ENCODE measurements at regions of chr12 and their contacts with region 1.

Region 1: GRCh38 chr12:2360629-2361168 is 307.9 kb downstream of the CACNA1C start:
- DNase-seq: no peak
- H3K4me3 ChIP-seq: no peak overlapping the region
- H3K27ac ChIP-seq: no peak overlapping the region
- H3K4me1 ChIP-seq: peaks cover 36% of the 10 kb centered on the region
- H3K27me3 ChIP-seq: no peaks in the 10 kb centered on the region
- CTCF ChIP-seq: peak; percentile 24 to 32

Region 2: GRCh38 chr12:2338991-2339431 is 21.7 kb before region 1 on chr12:
- CTCF ChIA-PET with region 1: no interaction called
- dilution Hi-C with region 1: no loop called
- in situ Hi-C with region 1: no loop called
- intact Hi-C with region 1: loop called (anchors 1 kb)
- DNase-seq: peak; percentile 85
- H3K4me3 ChIP-seq: no peak overlapping the region
- H3K27ac ChIP-seq: peak overlapping the region; percentile 53
- H3K4me1 ChIP-seq: peaks cover 57% of the 10 kb centered on the region
- H3K27me3 ChIP-seq: no peaks in the 10 kb centered on the region
- CTCF ChIP-seq: no peak

Region 3: GRCh38 chr12:2395354-2395977 is 34.8 kb after region 1 on chr12:
- CTCF ChIA-PET with region 1: no interaction called
- dilution Hi-C with region 1: loop called (anchors 5 kb)
- in situ Hi-C with region 1: no loop called
- intact Hi-C with region 1: no loop called
- DNase-seq: no peak
- H3K4me3 ChIP-seq: no peak overlapping the region
- H3K27ac ChIP-seq: no peak overlapping the region
- H3K4me1 ChIP-seq: peaks cover 12% of the 10 kb centered on the region
- H3K27me3 ChIP-seq: no peaks in the 10 kb centered on the region
- CTCF ChIP-seq: peak; percentile 78 to 79

Region 4: GRCh38 chr12:2547273-2548044 is 186.8 kb after region 1 on chr12:
- CTCF ChIA-PET with region 1: interaction called, 10 read pairs
- dilution Hi-C with region 1: no loop called
- in situ Hi-C with region 1: no loop called
- intact Hi-C with region 1: no loop called
- DNase-seq: no peak
- H3K4me3 ChIP-seq: no peak overlapping the region
- H3K27ac ChIP-seq: no peak overlapping the region
- H3K4me1 ChIP-seq: no peaks in the 10 kb centered on the region
- H3K27me3 ChIP-seq: no peaks in the 10 kb centered on the region
- CTCF ChIP-seq: no peak

Measured in mammary epithelial cell (primary cell).